CD4-positive, alpha-beta memory T cell (primary cell): ENCODE measurements at regions of chr22 and their contacts with region 1.

Region 1: GRCh38 chr22:22884010-22884887 is 3.4 kb upstream of the IGLL5 start:
- DNase-seq: peak; percentile 64 to 77 (median 71)
- H3K4me3 ChIP-seq: no peak overlapping the region
- H3K4me3 Mint-ChIP-seq: no peak overlapping the region
- H3K27ac ChIP-seq: no peak overlapping the region
- H3K27ac Mint-ChIP-seq: peak overlapping the region in 4 of 7 donors; percentile 13 to 54 (median 29)
- H3K4me1 ChIP-seq: no peaks in the 10 kb centered on the region
- H3K4me1 Mint-ChIP-seq: peaks cover 0 to 3% (median under 1%) of the 10 kb centered on the region in 4 donors
- H3K27me3 ChIP-seq: no peaks in the 10 kb centered on the region
- H3K27me3 Mint-ChIP-seq: peaks cover 2 to 11% of the 10 kb centered on the region in 2 donors

Region 2: GRCh38 chr22:22702237-22703202 is 181.7 kb before region 1 on chr22:
- CTCF ChIA-PET with region 1: interaction called, 29 read pairs
- POLR2A ChIA-PET with region 1: no interaction called
- intact Hi-C with region 1: no loop called
- DNase-seq: no peak
- H3K4me3 ChIP-seq: no peak overlapping the region
- H3K4me3 Mint-ChIP-seq: no peak overlapping the region
- H3K27ac ChIP-seq: no peak overlapping the region
- H3K27ac Mint-ChIP-seq: peak overlapping the region in 1 of 7 donors; percentile 4
- H3K4me1 ChIP-seq: no peaks in the 10 kb centered on the region
- H3K4me1 Mint-ChIP-seq: no peaks in the 10 kb centered on the region
- H3K27me3 ChIP-seq: no peaks in the 10 kb centered on the region
- H3K27me3 Mint-ChIP-seq: peaks cover 0 to 2% of the 10 kb centered on the region in 2 donors

Region 3: GRCh38 chr22:22748297-22748743 is 135.9 kb before region 1 on chr22:
- CTCF ChIA-PET with region 1: interaction called, 252 read pairs
- POLR2A ChIA-PET with region 1: interaction called, 24 read pairs
- intact Hi-C with region 1: loop called (anchors 1 kb)
- DNase-seq: peak in 4 of 5 donors; percentile 19 to 33 (median 24)
- H3K4me3 ChIP-seq: no peak overlapping the region
- H3K4me3 Mint-ChIP-seq: no peak overlapping the region
- H3K27ac ChIP-seq: no peak overlapping the region
- H3K27ac Mint-ChIP-seq: peak overlapping the region in 3 of 7 donors; percentile 17 to 74 (median 64)
- H3K4me1 ChIP-seq: peaks cover 11% of the 10 kb centered on the region
- H3K4me1 Mint-ChIP-seq: peaks cover 10 to 31% (median 24%) of the 10 kb centered on the region in 4 donors
- H3K27me3 ChIP-seq: no peaks in the 10 kb centered on the region
- H3K27me3 Mint-ChIP-seq: peaks cover 0 to 4% of the 10 kb centered on the region in 2 donors

Region 4: GRCh38 chr22:22787786-22788459 is 96.3 kb before region 1 on chr22:
- CTCF ChIA-PET with region 1: interaction called, 172 read pairs
- POLR2A ChIA-PET with region 1: interaction called, 12 read pairs
- intact Hi-C with region 1: loop called (anchors 1 kb)
- DNase-seq: peak; percentile 66 to 75 (median 70)
- H3K4me3 ChIP-seq: no peak overlapping the region
- H3K4me3 Mint-ChIP-seq: peak overlapping the region in 7 of 8 donors; percentile 6 to 61 (median 53)
- H3K27ac ChIP-seq: peak overlapping the region; percentile 49
- H3K27ac Mint-ChIP-seq: peak overlapping the region; percentile 79 to 94 (median 90)
- H3K4me1 ChIP-seq: peaks cover 58% of the 10 kb centered on the region
- H3K4me1 Mint-ChIP-seq: peaks cover 34 to 75% (median 52%) of the 10 kb centered on the region in 4 donors
- H3K27me3 ChIP-seq: no peaks in the 10 kb centered on the region
- H3K27me3 Mint-ChIP-seq: no peaks in the 10 kb centered on the region

Region 5: DNA sequence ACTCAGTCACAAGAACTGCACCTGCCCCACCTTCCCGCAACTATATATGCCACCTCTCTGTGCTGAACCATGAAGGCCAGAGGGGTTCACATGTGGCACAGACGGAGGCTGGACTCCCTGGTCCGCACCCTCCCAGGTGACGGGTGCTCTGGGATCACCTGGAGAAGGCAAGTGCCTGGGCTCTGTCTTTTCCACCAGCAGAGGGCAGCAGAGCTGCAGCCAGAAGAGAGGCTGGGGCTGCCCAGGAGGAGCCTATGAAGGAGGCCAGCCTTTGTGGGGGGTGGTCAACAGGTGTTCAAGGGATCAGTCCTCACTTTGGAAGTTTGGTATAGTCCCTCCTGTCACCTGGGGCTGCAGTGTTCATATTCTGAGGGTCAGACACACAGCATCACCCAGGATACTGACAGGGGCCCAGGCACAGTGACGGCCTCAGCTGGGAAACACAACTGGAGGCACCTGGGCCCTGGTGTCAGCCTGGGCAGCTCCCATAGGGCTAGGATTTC is 35.8 kb before region 1 on chr22:
- CTCF ChIA-PET with region 1: interaction called, 29 read pairs
- POLR2A ChIA-PET with region 1: no interaction called
- intact Hi-C with region 1: no loop called
- DNase-seq: peak; percentile 52 to 72 (median 57)
- H3K4me3 ChIP-seq: no peak overlapping the region
- H3K4me3 Mint-ChIP-seq: peak overlapping the region in 4 of 8 donors; percentile 32 to 49 (median 40)
- H3K27ac ChIP-seq: no peak overlapping the region
- H3K27ac Mint-ChIP-seq: peak overlapping the region in 5 of 7 donors; percentile 42 to 70 (median 61)
- H3K4me1 ChIP-seq: peaks cover 12% of the 10 kb centered on the region
- H3K4me1 Mint-ChIP-seq: peaks cover 31 to 55% (median 45%) of the 10 kb centered on the region in 4 donors
- H3K27me3 ChIP-seq: no peaks in the 10 kb centered on the region
- H3K27me3 Mint-ChIP-seq: peaks cover 0 to 1% of the 10 kb centered on the region in 2 donors

Region 6: GRCh38 chr22:22870577-22871404 is 13.5 kb before region 1 on chr22:
- CTCF ChIA-PET with region 1: interaction called, 21 read pairs
- POLR2A ChIA-PET with region 1: no interaction called
- intact Hi-C with region 1: no loop called
- DNase-seq: no peak
- H3K4me3 ChIP-seq: no peak overlapping the region
- H3K4me3 Mint-ChIP-seq: no peak overlapping the region
- H3K27ac ChIP-seq: no peak overlapping the region
- H3K27ac Mint-ChIP-seq: peak overlapping the region in 3 of 7 donors; percentile 29 to 72 (median 63)
- H3K4me1 ChIP-seq: peaks cover 13% of the 10 kb centered on the region
- H3K4me1 Mint-ChIP-seq: peaks cover 12 to 29% (median 15%) of the 10 kb centered on the region in 4 donors
- H3K27me3 ChIP-seq: no peaks in the 10 kb centered on the region
- H3K27me3 Mint-ChIP-seq: no peaks in the 10 kb centered on the region